ENCODE measurements at regions of chr9 and their contacts with region 1.

Region 1: GRCh38 chr9:101530077-101530711 is 3.5 kb upstream of the RNF20 start:
- DNase-seq: no peak

Region 2: GRCh38 chr9:101398068-101398929 is 131.9 kb before region 1 on chr9 and contains the starts of genes MRPL50 and ZNF189:
- intact Hi-C with region 1: loop called (anchors 5 kb)
- DNase-seq: peak; percentile 99
- total RNA-seq, gene MRPL50: 14.1 TPM
- total RNA-seq, gene ZNF189: 18.8 TPM

Region 3: GRCh38 chr9:101445353-101446029 is 84.7 kb before region 1 on chr9:
- intact Hi-C with region 1: no loop called
- DNase-seq: no peak

Region 4: GRCh38 chr9:101458955-101459631 is 71.1 kb before region 1 on chr9:
- intact Hi-C with region 1: loop called (anchors 2 kb)
- DNase-seq: no peak

Region 5: GRCh38 chr9:101465392-101465791 is 64.8 kb before region 1 on chr9:
- intact Hi-C with region 1: loop called (anchors 1 kb)
- DNase-seq: no peak

Measured in cardiac septum (tissue), 1 donor.